ENCODE measurements at regions of chr3 and their contacts with region 1.

Region 1: DNA sequence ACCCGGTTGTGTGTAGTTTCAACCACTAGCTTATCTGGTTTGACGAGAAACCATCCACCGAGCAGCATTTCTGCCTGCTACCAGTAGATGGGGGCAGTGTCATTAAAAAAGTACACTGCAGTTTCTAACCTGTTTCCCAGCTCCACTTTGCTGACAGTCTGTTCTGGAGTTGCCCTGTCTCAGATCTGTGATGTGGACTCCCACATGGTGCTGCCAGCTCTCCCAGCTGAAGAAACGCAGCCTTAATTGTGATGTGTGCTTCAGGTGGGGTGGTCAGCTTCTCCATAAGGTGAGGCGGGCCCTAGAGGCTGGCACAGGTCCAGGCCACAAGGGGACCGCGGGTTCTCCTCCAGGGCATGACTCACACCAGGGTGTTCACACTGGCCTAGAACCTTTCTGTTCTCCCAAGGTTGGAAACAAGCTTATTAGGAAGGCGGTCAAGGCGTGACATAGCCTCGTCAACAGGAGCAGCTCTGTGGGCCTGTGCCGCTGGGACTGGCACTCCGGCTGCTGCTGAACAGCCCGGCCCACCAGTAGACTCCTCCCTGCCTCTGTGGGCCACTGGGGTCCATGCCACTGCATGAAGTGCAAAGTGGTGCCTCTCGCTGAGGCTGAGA is 2.9 kb upstream of the FAM43A start:
- DNase-seq: no peak
- H3K4me3 ChIP-seq: no peak overlapping the region
- H3K27ac ChIP-seq: peak overlapping the region; percentile 59 to 83 (median 72)
- H3K4me1 ChIP-seq: peaks cover 20 to 47% (median 22%) of the 10 kb centered on the region in 3 donors
- H3K27me3 ChIP-seq: peaks cover 0 to 9% (median 0%) of the 10 kb centered on the region in 4 donors
- CTCF ChIP-seq: peak; percentile 76 to 97 (median 93)
- POLR2A ChIP-seq: no peak

Region 2: GRCh38 chr3:194870394-194871110 is 187.8 kb after region 1 on chr3:
- intact Hi-C with region 1: no loop called
- DNase-seq: no peak
- H3K4me3 ChIP-seq: no peak overlapping the region
- H3K27ac ChIP-seq: peak overlapping the region; percentile 79 to 91 (median 88)
- H3K4me1 ChIP-seq: peaks cover 27 to 59% (median 40%) of the 10 kb centered on the region in 3 donors
- H3K27me3 ChIP-seq: no peaks in the 10 kb centered on the region
- CTCF ChIP-seq: no peak
- POLR2A ChIP-seq: no peak

Region 3: DNA sequence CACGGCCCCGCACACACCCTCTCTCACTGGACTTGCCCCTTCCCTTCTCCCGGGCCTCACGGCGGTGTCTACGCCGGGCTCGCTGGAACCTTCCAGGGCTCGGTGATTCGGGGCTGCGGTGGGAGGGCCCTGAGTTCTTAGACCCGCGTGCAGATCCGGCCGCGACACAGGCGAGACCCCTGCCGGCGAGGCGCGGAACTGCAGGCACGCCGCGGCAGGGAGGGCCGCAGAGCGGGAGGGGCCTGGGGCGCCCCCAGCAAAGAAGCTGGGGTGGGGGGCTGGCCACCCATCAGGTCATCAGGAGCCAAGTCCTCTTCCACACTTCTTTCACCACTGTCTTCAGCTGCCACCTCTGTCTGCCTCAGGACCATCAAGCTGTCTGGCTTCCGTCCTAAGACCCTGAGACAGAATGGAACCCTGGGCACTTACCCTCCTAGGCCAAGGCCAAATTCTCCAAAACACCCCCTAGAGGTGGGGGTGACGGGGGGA is 423.7 kb after region 1 on chr3:
- intact Hi-C with region 1: loop called (anchors 5 kb)
- DNase-seq: no peak
- H3K4me3 ChIP-seq: peak overlapping the region in 2 of 4 donors; percentile 25 to 54
- H3K27ac ChIP-seq: peak overlapping the region in 3 of 4 donors; percentile 16 to 42 (median 29)
- H3K4me1 ChIP-seq: peaks cover 9 to 30% (median 13%) of the 10 kb centered on the region in 3 donors
- H3K27me3 ChIP-seq: no peaks in the 10 kb centered on the region
- CTCF ChIP-seq: peak; percentile 98 to 100 (median 99)
- POLR2A ChIP-seq: peak in 1 of 4 donors; percentile 9

Region 4: DNA sequence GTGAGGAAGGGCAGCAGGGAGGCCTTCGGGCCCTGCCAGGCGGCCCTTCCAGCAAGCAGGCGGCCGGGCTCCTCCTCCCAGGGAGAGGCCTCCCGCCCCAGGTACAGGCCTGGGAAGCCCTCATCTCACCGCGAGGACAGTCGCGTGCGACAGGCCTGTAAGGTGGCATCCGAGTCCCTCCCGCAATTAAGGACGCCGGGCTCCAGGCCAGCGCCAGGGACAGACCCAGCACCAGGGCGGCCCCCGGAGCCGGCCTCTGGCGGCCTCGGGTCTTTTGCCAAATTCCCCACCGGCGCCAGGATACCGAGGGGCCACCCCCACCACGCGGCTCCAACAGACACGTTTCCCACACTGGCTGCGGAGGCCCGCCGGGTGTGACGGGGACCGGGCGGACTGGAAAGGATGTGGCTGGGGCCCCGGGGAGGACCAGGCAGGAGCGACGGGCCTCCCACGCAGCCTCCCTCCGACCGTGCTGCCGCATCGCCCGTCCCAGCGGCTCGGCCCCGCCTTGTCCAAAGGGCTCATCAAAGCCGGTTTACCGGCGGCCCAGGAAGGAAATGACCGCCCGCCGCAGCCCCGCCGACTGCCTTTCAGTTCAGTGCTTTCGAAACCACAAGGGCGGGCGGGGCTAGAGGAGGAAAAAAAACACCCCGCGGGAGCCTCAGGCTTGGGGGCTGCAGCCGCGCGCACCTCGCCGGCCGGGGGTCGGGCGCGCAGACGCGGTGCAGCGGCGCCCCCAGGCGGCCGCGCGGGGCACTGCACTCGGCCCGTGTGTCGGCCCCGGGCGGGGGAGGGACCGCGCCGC is 576.9 kb after region 1 on chr3:
- intact Hi-C with region 1: loop called (anchors 5 kb)
- DNase-seq: peak; percentile 77
- H3K4me3 ChIP-seq: peak overlapping the region; percentile 60 to 81 (median 64)
- H3K27ac ChIP-seq: peak overlapping the region; percentile 87 to 96 (median 94)
- H3K4me1 ChIP-seq: peaks cover 9 to 55% (median 29%) of the 10 kb centered on the region in 3 donors
- H3K27me3 ChIP-seq: no peaks in the 10 kb centered on the region
- CTCF ChIP-seq: peak in 5 of 6 experiments; percentile 12 to 100 (median 99)
- POLR2A ChIP-seq: peak in 2 of 4 donors; percentile 67 to 74

Region 5: DNA sequence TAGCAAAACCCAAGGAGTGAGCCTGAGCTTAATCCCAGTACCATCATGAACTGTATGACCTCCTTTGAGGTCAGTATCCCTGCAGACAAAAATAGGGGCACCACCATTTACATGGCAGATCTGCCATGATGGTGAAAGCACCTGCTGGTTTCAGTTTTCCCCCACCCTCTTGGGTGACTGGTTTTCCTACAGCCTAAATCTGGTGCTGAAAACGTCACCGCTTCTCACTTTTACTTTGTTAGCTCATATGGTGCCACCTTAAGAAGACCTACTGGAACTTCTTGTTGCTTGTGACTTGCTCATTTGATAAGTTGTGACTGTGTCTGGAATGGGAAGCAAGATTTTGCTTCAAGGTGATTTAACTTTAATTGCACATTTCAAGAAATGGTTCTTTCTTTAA is 855.2 kb after region 1 on chr3:
- intact Hi-C with region 1: loop called (anchors 5 kb)
- DNase-seq: no peak
- H3K4me3 ChIP-seq: no peak overlapping the region
- H3K27ac ChIP-seq: no peak overlapping the region
- H3K4me1 ChIP-seq: peaks cover 8 to 56% (median 20%) of the 10 kb centered on the region in 3 donors
- H3K27me3 ChIP-seq: no peaks in the 10 kb centered on the region
- CTCF ChIP-seq: no peak
- POLR2A ChIP-seq: no peak